ENCODE measurements at regions of chr7 and their contacts with region 1.

Region 1: GRCh38 chr7:43582503-43583423 is at the start of gene STK17A:
- DNase-seq: peak; percentile 87 to 98 (median 93)
- ATAC-seq: peak; percentile 70 to 87 (median 80)
- H3K4me3 ChIP-seq: peak within 1 kb of the TSS; percentile 94 to 96
- H3K4me3 Mint-ChIP-seq: peak within 1 kb of the TSS; percentile 96 to 99 (median 98)
- H3K27ac ChIP-seq: peak within 1 kb of the TSS; percentile 95
- H3K27ac Mint-ChIP-seq: peak within 1 kb of the TSS; percentile 95 to 98
- H3K4me1 ChIP-seq: peaks cover 4 to 12% of the 10 kb centered on the region in 2 experiments
- H3K4me1 Mint-ChIP-seq: peaks cover 14 to 40% (median 26%) of the 10 kb centered on the region in 3 donors
- H3K27me3 ChIP-seq: no peaks in the 10 kb centered on the region
- H3K27me3 Mint-ChIP-seq: peaks cover 0 to 5% of the 10 kb centered on the region in 2 donors
- total RNA-seq, gene STK17A: 101 to 120 (median 117) TPM

Region 2: GRCh38 chr7:42924223-42924838 is 658.4 kb before region 1 on chr7:
- CTCF ChIA-PET with region 1: interaction called in 1 of 2 experiments, 7 read pairs
- POLR2A ChIA-PET with region 1: interaction called, 3 to 13 read pairs
- DNase-seq: no peak
- ATAC-seq: no peak
- H3K4me3 ChIP-seq: no peak overlapping the region
- H3K4me3 Mint-ChIP-seq: no peak overlapping the region
- H3K27ac ChIP-seq: no peak overlapping the region
- H3K27ac Mint-ChIP-seq: no peak overlapping the region
- H3K4me1 ChIP-seq: no peaks in the 10 kb centered on the region
- H3K4me1 Mint-ChIP-seq: peaks cover 37 to 38% (median 37%) of the 10 kb centered on the region in 3 donors
- H3K27me3 ChIP-seq: no peaks in the 10 kb centered on the region
- H3K27me3 Mint-ChIP-seq: no peaks in the 10 kb centered on the region

Region 3: DNA sequence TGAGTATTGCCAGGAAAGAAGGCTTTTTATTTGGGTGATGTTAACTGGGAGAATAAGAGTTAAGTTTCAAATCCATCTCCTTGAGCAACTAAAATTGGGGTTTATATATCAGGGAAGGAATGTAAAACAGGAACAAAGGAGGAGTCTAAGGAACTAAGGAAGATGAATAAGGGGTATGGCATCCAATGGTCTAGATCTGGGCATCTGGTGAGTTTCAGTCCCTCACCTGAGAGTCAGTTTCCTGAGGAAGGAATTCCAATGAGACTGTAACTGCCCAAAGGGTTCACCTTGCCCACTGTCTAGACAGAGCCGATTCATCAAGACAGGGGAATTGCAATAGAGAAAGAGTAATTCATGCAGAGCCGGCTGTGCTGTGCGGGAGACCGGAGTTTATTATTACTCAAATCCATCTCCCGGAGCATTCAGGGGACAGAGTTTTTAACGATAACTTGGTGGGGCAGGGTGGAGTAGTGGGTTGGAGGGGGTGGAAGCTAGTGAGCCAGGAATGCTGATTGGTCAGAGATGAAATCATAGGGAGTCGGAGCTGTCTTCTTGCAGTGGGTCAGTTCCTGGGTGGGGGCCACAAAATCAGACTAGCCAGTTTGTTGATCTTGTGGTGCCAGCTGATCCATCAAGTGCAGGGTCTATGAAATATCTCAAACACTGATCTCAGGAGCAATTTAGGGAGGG is 188.2 kb before region 1 on chr7:
- CTCF ChIA-PET with region 1: no interaction called
- POLR2A ChIA-PET with region 1: no interaction called
- DNase-seq: no peak
- ATAC-seq: no peak
- H3K4me3 ChIP-seq: no peak overlapping the region
- H3K4me3 Mint-ChIP-seq: no peak overlapping the region
- H3K27ac ChIP-seq: no peak overlapping the region
- H3K27ac Mint-ChIP-seq: no peak overlapping the region
- H3K4me1 ChIP-seq: no peaks in the 10 kb centered on the region
- H3K4me1 Mint-ChIP-seq: no peaks in the 10 kb centered on the region
- H3K27me3 ChIP-seq: no peaks in the 10 kb centered on the region
- H3K27me3 Mint-ChIP-seq: peaks cover 21 to 28% of the 10 kb centered on the region in 2 donors

Region 4: GRCh38 chr7:43612599-43613589 is 30.1 kb after region 1 on chr7:
- CTCF ChIA-PET with region 1: interaction called, 4 to 63 read pairs
- POLR2A ChIA-PET with region 1: interaction called, 8 to 19 read pairs
- DNase-seq: no peak
- ATAC-seq: peak; percentile 20 to 33 (median 30)
- H3K4me3 ChIP-seq: no peak overlapping the region
- H3K4me3 Mint-ChIP-seq: peak overlapping the region in 2 of 3 donors; percentile 15 to 34
- H3K27ac ChIP-seq: peak overlapping the region; percentile 48
- H3K27ac Mint-ChIP-seq: peak overlapping the region; percentile 80 to 87
- H3K4me1 ChIP-seq: peaks cover 33 to 66% of the 10 kb centered on the region in 2 experiments
- H3K4me1 Mint-ChIP-seq: peaks cover 44 to 74% (median 55%) of the 10 kb centered on the region in 3 donors
- H3K27me3 ChIP-seq: no peaks in the 10 kb centered on the region
- H3K27me3 Mint-ChIP-seq: no peaks in the 10 kb centered on the region

Region 5: DNA sequence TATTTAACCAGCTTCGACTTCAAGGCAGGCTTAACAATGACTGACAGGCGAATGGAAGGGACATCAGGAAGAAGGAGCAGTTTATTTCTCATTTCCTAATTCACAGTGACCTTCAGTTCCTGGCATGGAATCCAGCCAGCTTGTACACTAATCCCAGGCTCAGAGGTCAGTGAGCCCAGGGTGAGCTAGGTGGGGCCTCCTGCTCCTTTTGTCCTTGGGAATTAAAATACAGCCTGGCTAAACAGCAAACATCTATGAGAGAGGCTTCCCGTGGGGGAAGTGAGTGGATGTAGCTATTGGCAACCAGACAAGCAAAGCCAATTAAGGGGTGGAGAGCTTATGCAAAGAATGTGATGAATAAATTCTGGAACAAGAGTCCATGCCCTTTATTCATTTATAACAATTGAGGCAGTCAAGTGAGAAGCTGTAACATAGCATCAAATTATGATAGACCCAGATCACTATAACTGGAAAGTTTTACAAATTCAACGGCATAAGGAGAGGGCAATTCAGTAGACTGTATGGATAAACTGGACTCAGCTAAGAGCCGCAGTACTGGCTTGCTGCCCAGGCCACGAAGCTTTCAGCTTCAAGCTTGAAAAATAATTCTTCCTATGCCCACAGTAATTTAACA is 57.2 kb after region 1 on chr7:
- CTCF ChIA-PET with region 1: interaction called, 11 to 25 read pairs
- POLR2A ChIA-PET with region 1: interaction called, 5 to 22 read pairs
- DNase-seq: no peak
- ATAC-seq: no peak
- H3K4me3 ChIP-seq: no peak overlapping the region
- H3K4me3 Mint-ChIP-seq: peak overlapping the region in 1 of 3 donors; percentile 72
- H3K27ac ChIP-seq: peak overlapping the region; percentile 62
- H3K27ac Mint-ChIP-seq: peak overlapping the region; percentile 78 to 89
- H3K4me1 ChIP-seq: peaks cover 70 to 79% of the 10 kb centered on the region in 2 experiments
- H3K4me1 Mint-ChIP-seq: peaks cover 94 to 97% (median 96%) of the 10 kb centered on the region in 3 donors
- H3K27me3 ChIP-seq: no peaks in the 10 kb centered on the region
- H3K27me3 Mint-ChIP-seq: no peaks in the 10 kb centered on the region

Region 6: DNA sequence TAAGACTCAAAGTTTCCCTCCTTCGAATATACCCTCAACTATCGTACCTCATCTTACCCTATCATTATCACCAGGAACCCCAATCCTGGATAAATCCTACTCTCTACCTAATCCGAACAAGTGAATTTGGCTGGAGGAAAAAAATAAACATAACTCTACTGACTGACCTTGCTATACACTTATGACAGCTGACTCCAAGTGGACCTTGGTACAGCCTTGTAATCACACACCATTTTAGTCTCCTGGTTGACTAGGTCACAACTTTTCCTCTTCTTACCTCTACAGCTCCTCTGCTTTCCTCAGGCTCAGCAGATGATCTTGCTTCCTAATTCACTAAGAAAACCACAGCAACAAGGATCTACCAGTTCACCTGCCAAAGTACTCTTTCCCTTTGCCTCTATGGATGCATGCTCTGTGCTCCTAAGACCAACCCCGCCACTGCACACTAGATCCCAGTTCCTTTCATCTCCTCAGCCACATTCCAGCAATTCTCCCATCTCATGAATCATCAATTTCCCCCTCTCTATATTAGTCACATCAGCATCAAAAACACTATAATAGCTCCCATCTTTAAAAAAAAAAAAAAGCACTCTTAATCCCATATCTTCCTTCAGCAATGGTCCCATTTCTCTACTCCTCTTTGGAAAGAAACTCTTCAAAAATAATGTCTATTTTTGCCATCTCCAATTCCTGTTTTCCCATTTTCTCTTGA is 111.1 kb after region 1 on chr7:
- CTCF ChIA-PET with region 1: interaction called, 152 to 548 read pairs
- POLR2A ChIA-PET with region 1: interaction called, 10 to 43 read pairs
- DNase-seq: no peak
- ATAC-seq: no peak
- H3K4me3 ChIP-seq: no peak overlapping the region
- H3K4me3 Mint-ChIP-seq: no peak overlapping the region
- H3K27ac ChIP-seq: no peak overlapping the region
- H3K27ac Mint-ChIP-seq: no peak overlapping the region
- H3K4me1 ChIP-seq: peaks cover 23 to 27% of the 10 kb centered on the region in 2 experiments
- H3K4me1 Mint-ChIP-seq: peaks cover 31 to 36% (median 34%) of the 10 kb centered on the region in 3 donors
- H3K27me3 ChIP-seq: no peaks in the 10 kb centered on the region
- H3K27me3 Mint-ChIP-seq: no peaks in the 10 kb centered on the region

Region 7: DNA sequence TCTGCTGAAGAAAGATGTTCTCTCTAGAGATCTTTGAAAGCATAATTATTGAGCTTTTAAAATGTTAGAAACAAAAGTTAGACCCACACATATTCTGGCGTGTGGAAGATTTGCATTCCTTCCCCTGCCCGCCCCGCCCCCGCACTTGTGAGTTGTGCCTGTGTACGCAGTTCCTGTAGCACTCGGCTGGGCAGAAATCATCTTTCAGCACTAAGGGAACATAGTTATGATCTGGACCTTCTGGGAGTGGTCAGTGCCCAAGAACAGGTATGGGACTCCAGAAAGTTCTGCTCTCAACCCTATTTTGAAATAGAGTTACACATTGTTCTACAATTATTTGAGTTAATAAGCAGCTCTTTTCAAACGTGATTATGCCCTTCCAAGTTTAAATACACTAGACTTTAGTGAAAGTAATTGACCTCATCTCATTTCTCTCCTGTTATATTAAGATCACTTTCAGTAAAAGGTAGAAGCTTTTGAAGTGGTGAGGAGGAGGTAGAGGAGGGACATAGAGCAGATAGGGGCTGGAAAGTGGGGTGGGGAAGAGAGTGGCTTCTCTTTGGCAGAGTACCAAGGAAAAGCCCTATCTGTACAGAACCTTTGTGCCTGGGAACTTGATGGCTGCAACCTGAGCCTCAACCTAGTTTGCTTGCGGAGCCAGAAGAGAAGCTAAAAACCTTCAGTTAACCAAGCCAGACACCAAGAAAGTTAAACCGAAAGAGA is 181.4 kb after region 1 on chr7:
- CTCF ChIA-PET with region 1: interaction called, 4 to 12 read pairs
- POLR2A ChIA-PET with region 1: interaction called in 1 of 2 experiments, 3 read pairs
- DNase-seq: peak in 21 of 35 experiments; percentile 9 to 45 (median 25)
- ATAC-seq: peak; percentile 23 to 53 (median 51)
- H3K4me3 ChIP-seq: no peak overlapping the region
- H3K4me3 Mint-ChIP-seq: peak overlapping the region; percentile 21 to 62 (median 35)
- H3K27ac ChIP-seq: no peak overlapping the region
- H3K27ac Mint-ChIP-seq: peak overlapping the region; percentile 52 to 55
- H3K4me1 ChIP-seq: peaks cover 2 to 6% of the 10 kb centered on the region in 2 experiments
- H3K4me1 Mint-ChIP-seq: peaks cover 34 to 47% (median 47%) of the 10 kb centered on the region in 3 donors
- H3K27me3 ChIP-seq: no peaks in the 10 kb centered on the region
- H3K27me3 Mint-ChIP-seq: no peaks in the 10 kb centered on the region

Region 8: GRCh38 chr7:43844031-43844656 is 261.4 kb after region 1 on chr7:
- CTCF ChIA-PET with region 1: interaction called, 17 to 74 read pairs
- POLR2A ChIA-PET with region 1: interaction called, 6 to 11 read pairs
- DNase-seq: no peak
- ATAC-seq: no peak
- H3K4me3 ChIP-seq: no peak overlapping the region
- H3K4me3 Mint-ChIP-seq: no peak overlapping the region
- H3K27ac ChIP-seq: no peak overlapping the region
- H3K27ac Mint-ChIP-seq: no peak overlapping the region
- H3K4me1 ChIP-seq: no peaks in the 10 kb centered on the region
- H3K4me1 Mint-ChIP-seq: peaks cover 0 to under 1% (median 0%) of the 10 kb centered on the region in 3 donors
- H3K27me3 ChIP-seq: peaks cover 0 to 10% of the 10 kb centered on the region in 2 experiments
- H3K27me3 Mint-ChIP-seq: peaks cover 0 to 10% of the 10 kb centered on the region in 2 donors

Region 9: GRCh38 chr7:44348300-44348699 is 765.5 kb after region 1 on chr7:
- CTCF ChIA-PET with region 1: no interaction called
- POLR2A ChIA-PET with region 1: no interaction called
- DNase-seq: peak in 3 of 35 experiments; percentile 4 to 29 (median 8)
- ATAC-seq: no peak
- H3K4me3 ChIP-seq: no peak overlapping the region
- H3K4me3 Mint-ChIP-seq: no peak overlapping the region
- H3K27ac ChIP-seq: no peak overlapping the region
- H3K27ac Mint-ChIP-seq: no peak overlapping the region
- H3K4me1 ChIP-seq: no peaks in the 10 kb centered on the region
- H3K4me1 Mint-ChIP-seq: no peaks in the 10 kb centered on the region
- H3K27me3 ChIP-seq: peaks cover 0 to 33% of the 10 kb centered on the region in 2 experiments
- H3K27me3 Mint-ChIP-seq: peaks cover 33 to 36% of the 10 kb centered on the region in 2 donors